Breast epithelium (tissue), 4 donors: ENCODE measurements at regions of chr5 and their contacts with region 1.

Region 1: GRCh38 chr5:132459983-132460838 is 30.4 kb downstream of the IRF1 start:
- DNase-seq: no peak
- H3K4me3 ChIP-seq: no peak overlapping the region
- H3K27ac ChIP-seq: peak overlapping the region in 1 of 2 donors; percentile 75
- H3K4me1 ChIP-seq: peaks cover 5 to 9% of the 10 kb centered on the region in 2 donors
- H3K27me3 ChIP-seq: no peaks in the 10 kb centered on the region
- CTCF ChIP-seq: peak in 1 of 3 donors; percentile 12
- POLR2A ChIP-seq: no peak

Region 2: DNA sequence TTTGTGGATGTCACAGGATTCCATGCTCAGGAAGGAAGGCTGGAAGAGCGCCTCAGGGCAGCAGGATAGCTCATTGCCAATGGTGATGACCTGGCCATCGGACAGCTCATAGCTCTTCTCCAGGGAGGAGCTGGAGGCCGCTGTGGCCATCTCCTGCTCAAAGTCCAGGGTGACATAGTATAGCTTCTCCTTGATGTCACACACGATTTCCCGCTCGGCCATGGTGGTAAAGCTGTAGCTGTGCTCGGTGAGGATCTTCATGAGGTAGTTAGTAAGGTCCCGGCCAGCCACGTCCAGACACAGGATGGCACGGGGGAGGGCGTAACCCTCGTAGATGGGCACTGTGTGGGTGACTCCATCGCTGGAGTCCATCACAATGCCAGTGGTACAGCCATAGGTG is 800.9 kb before region 1 on chr5:
- intact Hi-C with region 1: no loop called
- DNase-seq: no peak
- H3K4me3 ChIP-seq: no peak overlapping the region
- H3K27ac ChIP-seq: no peak overlapping the region
- H3K4me1 ChIP-seq: peaks cover 0 to 6% of the 10 kb centered on the region in 2 donors
- H3K27me3 ChIP-seq: no peaks in the 10 kb centered on the region
- CTCF ChIP-seq: no peak
- POLR2A ChIP-seq: no peak

Region 3: DNA sequence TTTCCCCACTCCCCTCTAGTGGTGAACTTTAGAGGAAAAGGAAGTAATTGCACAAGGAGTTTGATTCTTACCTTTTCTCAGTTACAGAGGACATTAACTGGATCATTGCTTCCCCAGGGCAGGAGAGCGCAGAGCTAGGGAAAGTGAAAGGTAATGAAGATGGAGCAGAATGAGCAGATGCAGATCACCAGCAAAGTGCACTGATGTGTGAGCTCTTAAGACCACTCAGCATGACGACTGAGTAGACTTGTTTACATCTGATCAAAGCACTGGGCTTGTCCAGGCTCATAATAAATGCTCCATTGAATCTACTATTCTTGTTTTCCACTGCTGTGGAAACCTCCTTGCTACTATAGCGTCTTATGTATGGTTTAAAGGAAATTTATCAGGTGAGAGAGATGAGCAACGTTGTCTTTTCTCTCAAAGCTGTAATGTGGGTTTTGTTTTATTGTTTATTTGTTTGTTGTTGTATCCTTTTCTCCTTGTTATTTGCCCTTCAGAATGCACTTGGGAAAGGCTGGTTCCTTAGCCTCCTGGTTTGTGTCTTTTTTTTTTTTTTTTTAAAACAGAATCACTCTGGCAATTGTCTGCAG is 65.4 kb before region 1 on chr5:
- intact Hi-C with region 1: loop called (anchors 2 kb)
- DNase-seq: no peak
- H3K4me3 ChIP-seq: no peak overlapping the region
- H3K27ac ChIP-seq: no peak overlapping the region
- H3K4me1 ChIP-seq: peaks cover 0 to 2% of the 10 kb centered on the region in 2 donors
- H3K27me3 ChIP-seq: no peaks in the 10 kb centered on the region
- CTCF ChIP-seq: no peak
- POLR2A ChIP-seq: no peak

Region 4: DNA sequence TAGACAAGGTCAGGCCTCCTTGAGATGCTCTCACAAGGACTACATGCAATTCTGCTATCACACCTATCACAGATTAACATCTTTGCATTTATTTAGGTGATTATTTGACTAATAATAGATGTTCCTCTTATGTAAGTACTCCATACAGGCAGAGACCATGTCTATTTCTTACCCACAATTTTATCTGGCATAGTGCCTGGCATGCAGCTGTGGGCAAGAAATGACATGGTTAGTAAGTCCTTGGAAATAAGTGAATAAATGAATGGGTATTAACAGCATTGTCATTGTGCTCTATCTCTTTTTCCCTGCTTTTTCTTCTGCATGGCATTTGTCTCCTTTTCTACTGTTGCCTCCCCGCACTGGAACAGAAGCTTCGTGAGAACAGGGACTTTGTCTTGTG is 41.3 kb before region 1 on chr5:
- intact Hi-C with region 1: loop called (anchors 1 kb)
- DNase-seq: no peak
- H3K4me3 ChIP-seq: no peak overlapping the region
- H3K27ac ChIP-seq: peak overlapping the region; percentile 44 to 79
- H3K4me1 ChIP-seq: peaks cover 10 to 24% of the 10 kb centered on the region in 2 donors
- H3K27me3 ChIP-seq: no peaks in the 10 kb centered on the region
- CTCF ChIP-seq: no peak
- POLR2A ChIP-seq: no peak

Region 5: GRCh38 chr5:132883261-132883834 is 423.1 kb after region 1 on chr5:
- intact Hi-C with region 1: no loop called
- DNase-seq: peak in 1 of 2 donors; percentile 39
- H3K4me3 ChIP-seq: no peak overlapping the region
- H3K27ac ChIP-seq: no peak overlapping the region
- H3K4me1 ChIP-seq: no peaks in the 10 kb centered on the region
- H3K27me3 ChIP-seq: no peaks in the 10 kb centered on the region
- CTCF ChIP-seq: peak; percentile 49 to 67 (median 62)
- POLR2A ChIP-seq: no peak